ENCODE measurements at regions of chr1 and their contacts with region 1.

Region 1: GRCh38 chr1:234499119-234499942 is 20.4 kb upstream of the TARBP1 start:
- DNase-seq: peak; percentile 75
- CTCF ChIP-seq: peak; percentile 90

Region 2: GRCh38 chr1:234599617-234600417 is 100.5 kb after region 1 on chr1:
- in situ Hi-C with region 1: loop called (anchors 5 kb)
- DNase-seq: peak; percentile 85
- CTCF ChIP-seq: no peak